MCF 10A (cell line): ENCODE measurements at regions of chr7 and their contacts with region 1.

Region 1: DNA sequence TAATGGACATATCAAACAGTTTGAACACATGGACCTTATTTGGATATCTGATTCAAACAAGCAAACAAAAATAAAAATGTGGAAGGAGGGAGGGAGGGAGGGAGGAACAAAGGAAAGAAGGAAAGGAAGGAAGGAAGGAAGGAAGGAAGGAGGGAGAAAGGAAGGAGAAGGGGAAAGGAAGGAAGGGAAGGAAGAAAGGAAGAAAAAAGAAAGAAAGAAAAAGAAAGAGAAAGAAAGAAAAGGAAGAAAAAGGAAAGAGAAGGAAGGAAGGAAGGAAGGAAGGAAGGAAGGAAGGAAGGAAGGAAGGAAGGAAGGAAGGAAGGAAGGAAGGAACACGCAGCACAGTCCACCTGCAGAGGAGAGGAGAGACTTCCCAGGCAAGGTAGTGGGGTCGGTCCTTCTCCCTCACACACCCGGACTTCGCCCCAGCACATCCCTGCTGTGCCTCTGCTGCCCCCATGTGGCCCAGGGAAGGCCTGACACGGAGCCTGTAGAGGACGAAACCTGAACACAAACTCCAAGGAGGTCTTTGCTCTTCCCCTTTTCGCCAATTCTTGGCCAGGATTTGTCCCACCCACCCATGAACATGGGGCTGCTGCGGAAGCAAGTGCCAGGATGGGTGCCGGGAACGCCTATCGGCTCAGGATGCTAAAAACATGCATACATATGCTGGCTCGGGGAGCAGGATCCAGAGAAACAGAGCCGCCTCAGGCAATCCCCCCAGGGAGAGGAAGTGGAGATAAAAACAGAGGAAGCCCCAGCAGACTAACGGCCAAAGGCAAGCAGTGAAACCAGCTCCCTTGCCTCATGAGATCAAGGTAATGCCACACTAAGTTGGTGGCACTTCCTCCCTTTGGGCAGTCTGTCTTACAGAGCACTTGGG is 52.3 kb upstream of the DGKI start:
- DNase-seq: peak; percentile 76
- H3K4me3 Mint-ChIP-seq: no peak overlapping the region
- H3K27ac Mint-ChIP-seq: peak overlapping the region; percentile 81
- H3K4me1 Mint-ChIP-seq: peaks cover 10% of the 10 kb centered on the region
- H3K27me3 Mint-ChIP-seq: no peaks in the 10 kb centered on the region
- CTCF ChIP-seq: peak; percentile 92

Region 2: DNA sequence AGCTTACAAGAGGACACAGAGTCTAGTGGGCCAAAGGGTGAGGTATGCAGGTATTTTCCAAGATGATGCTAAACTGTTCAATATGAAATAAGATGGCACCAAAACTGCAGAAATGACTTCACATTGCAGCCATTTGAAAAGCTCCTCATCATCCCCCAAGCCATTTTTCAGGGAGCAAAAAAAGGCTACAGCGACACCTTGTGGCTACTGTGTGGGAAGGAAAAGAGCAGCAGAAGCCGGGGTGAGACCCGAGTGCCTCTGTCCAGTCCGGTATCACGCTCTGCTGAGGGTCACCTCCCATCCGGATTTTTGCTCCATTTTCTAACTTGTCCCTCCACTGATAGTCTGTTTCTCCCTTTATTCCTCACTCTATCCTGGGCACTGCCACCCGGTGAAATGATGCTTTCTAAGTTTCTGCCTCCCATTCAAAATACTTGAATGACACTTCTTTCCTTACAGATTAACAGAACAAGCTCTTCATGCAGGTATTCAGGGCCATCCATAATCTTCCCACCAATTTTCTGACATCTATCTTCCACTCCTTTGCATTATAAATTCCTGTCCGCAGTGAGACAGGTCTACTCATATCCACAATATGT is 272.5 kb before region 1 on chr7:
- CTCF ChIA-PET with region 1: interaction called, 11 read pairs
- POLR2A ChIA-PET with region 1: no interaction called
- intact Hi-C with region 1: no loop called
- DNase-seq: peak; percentile 73
- H3K4me3 Mint-ChIP-seq: no peak overlapping the region
- H3K27ac Mint-ChIP-seq: no peak overlapping the region
- H3K4me1 Mint-ChIP-seq: peaks cover 5% of the 10 kb centered on the region
- H3K27me3 Mint-ChIP-seq: peaks cover 25% of the 10 kb centered on the region
- CTCF ChIP-seq: peak; percentile 66

Region 3: DNA sequence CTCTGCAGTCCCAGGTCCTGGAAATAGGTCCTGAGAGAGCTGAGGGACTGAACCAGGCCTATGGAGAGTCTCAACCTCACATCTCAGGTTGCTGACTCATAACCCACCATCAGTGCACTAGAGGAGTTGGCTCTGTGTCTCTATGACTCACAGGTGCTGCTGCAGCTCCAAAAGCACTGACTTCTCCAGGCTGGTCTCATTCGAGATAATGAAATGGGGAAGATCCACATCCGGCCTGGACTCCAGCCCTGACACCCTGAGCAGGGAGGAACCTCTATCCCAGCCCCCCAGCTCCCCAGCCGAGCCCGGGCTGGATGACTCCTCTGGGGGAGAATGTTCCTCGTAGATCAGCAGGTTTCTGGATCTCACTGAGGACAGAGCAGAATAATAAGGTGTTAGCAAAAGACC is 16.8 kb before region 1 on chr7:
- CTCF ChIA-PET with region 1: interaction called, 10 read pairs
- POLR2A ChIA-PET with region 1: no interaction called
- intact Hi-C with region 1: no loop called
- DNase-seq: peak; percentile 98
- H3K4me3 Mint-ChIP-seq: peak overlapping the region; percentile 13
- H3K27ac Mint-ChIP-seq: peak overlapping the region; percentile 52
- H3K4me1 Mint-ChIP-seq: peaks cover 38% of the 10 kb centered on the region
- H3K27me3 Mint-ChIP-seq: no peaks in the 10 kb centered on the region
- CTCF ChIP-seq: no peak

Region 4: GRCh38 chr7:137923380-137923779 is 24.3 kb after region 1 on chr7:
- CTCF ChIA-PET with region 1: interaction called, 19 read pairs
- POLR2A ChIA-PET with region 1: no interaction called
- intact Hi-C with region 1: no loop called
- DNase-seq: peak; percentile 57
- H3K4me3 Mint-ChIP-seq: no peak overlapping the region
- H3K27ac Mint-ChIP-seq: peak overlapping the region; percentile 14
- H3K4me1 Mint-ChIP-seq: peaks cover 17% of the 10 kb centered on the region
- H3K27me3 Mint-ChIP-seq: no peaks in the 10 kb centered on the region
- CTCF ChIP-seq: no peak

Region 5: GRCh38 chr7:138002096-138002827 is 103.2 kb after region 1 on chr7:
- CTCF ChIA-PET with region 1: interaction called, 563 read pairs
- POLR2A ChIA-PET with region 1: interaction called, 5 read pairs
- intact Hi-C with region 1: no loop called
- DNase-seq: peak; percentile 99
- H3K4me3 Mint-ChIP-seq: peak overlapping the region; percentile 93
- H3K27ac Mint-ChIP-seq: peak overlapping the region; percentile 62
- H3K4me1 Mint-ChIP-seq: peaks cover 23% of the 10 kb centered on the region
- H3K27me3 Mint-ChIP-seq: no peaks in the 10 kb centered on the region
- CTCF ChIP-seq: peak; percentile 95

Region 6: GRCh38 chr7:138015096-138015495 is 116.0 kb after region 1 on chr7:
- CTCF ChIA-PET with region 1: interaction called, 563 read pairs
- POLR2A ChIA-PET with region 1: no interaction called
- intact Hi-C with region 1: no loop called
- DNase-seq: no peak
- H3K4me3 Mint-ChIP-seq: no peak overlapping the region
- H3K27ac Mint-ChIP-seq: no peak overlapping the region
- H3K4me1 Mint-ChIP-seq: no peaks in the 10 kb centered on the region
- H3K27me3 Mint-ChIP-seq: no peaks in the 10 kb centered on the region
- CTCF ChIP-seq: no peak

Region 7: DNA sequence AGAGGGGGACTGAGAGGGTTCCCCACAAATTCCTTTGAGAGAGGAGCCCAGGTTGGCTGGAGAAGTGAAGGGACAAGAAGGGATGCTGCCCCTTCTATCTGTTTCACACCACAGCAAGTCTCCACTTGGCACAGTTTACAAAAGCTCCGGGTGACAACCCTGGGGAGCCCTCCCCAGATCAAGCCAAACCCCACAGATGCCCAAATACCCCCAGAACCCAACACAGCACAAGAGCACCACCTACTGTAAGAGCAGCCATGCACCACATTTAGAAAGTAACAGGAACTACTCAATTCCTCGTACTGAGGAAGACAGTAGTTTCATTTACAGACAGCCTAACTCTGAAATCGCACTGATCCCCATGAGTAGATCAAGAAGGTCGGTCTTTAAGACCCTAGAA is 966.8 kb after region 1 on chr7:
- CTCF ChIA-PET with region 1: interaction called, 3 read pairs
- POLR2A ChIA-PET with region 1: no interaction called
- intact Hi-C with region 1: loop called (anchors 10 kb)
- DNase-seq: no peak
- H3K4me3 Mint-ChIP-seq: no peak overlapping the region
- H3K27ac Mint-ChIP-seq: no peak overlapping the region
- H3K4me1 Mint-ChIP-seq: peaks cover 20% of the 10 kb centered on the region
- H3K27me3 Mint-ChIP-seq: no peaks in the 10 kb centered on the region
- CTCF ChIP-seq: peak; percentile 38